B cell (primary cell): ENCODE measurements at regions of chr3 and their contacts with region 1.

Region 1: DNA sequence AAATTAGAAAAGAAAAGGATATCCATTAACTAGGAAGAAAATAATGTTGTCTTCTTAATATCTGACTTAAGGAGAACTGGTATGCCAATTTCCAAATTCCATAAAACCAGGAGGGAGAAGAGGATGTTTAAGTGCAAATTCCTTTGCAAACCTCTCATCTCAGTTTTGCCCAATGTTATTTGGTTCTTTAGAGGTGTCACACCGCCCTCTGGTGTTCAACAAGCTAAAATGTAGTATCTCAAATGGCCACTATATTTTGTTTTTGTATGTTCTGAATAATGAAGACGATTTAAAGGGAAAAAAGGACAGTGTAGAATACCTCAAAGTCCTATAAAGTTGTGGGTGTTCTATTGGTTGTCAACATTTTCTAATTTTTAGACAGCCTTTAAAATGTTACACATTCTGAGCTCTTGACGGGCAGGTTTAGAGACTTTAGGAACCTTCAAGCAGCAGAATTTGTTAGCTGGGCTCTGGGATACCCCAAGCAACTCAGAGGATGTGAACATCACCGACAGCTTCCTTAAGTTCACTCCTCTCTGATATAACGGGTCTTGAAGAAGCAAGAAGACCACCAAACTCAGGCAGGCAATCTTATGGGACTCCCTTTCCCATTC is 458.3 kb downstream of the MFSD1 start:
- DNase-seq: peak; percentile 55
- ATAC-seq: no peak
- H3K4me3 ChIP-seq: no peak overlapping the region
- H3K4me3 Mint-ChIP-seq: no peak overlapping the region
- H3K27ac ChIP-seq: no peak overlapping the region
- H3K27ac Mint-ChIP-seq: no peak overlapping the region
- H3K4me1 ChIP-seq: no peaks in the 10 kb centered on the region
- H3K4me1 Mint-ChIP-seq: no peaks in the 10 kb centered on the region
- H3K27me3 ChIP-seq: no peaks in the 10 kb centered on the region
- H3K27me3 Mint-ChIP-seq: peaks cover 34% of the 10 kb centered on the region
- CTCF ChIP-seq: peak; percentile 82

Region 2: GRCh38 chr3:158727206-158728060 is 532.7 kb before region 1 on chr3:
- CTCF ChIA-PET with region 1: interaction called, 8 read pairs
- POLR2A ChIA-PET with region 1: no interaction called
- intact Hi-C with region 1: loop called (anchors 5 kb)
- DNase-seq: peak; percentile 74
- ATAC-seq: peak; percentile 62
- H3K4me3 ChIP-seq: peak overlapping the region in 1 of 5 experiments; percentile 56
- H3K4me3 Mint-ChIP-seq: peak overlapping the region; percentile 25
- H3K27ac ChIP-seq: no peak overlapping the region
- H3K27ac Mint-ChIP-seq: no peak overlapping the region
- H3K4me1 ChIP-seq: peaks cover 20 to 27% of the 10 kb centered on the region in 2 donors
- H3K4me1 Mint-ChIP-seq: peaks cover 23% of the 10 kb centered on the region
- H3K27me3 ChIP-seq: peaks cover 0 to 9% (median 3%) of the 10 kb centered on the region in 4 experiments
- H3K27me3 Mint-ChIP-seq: peaks cover 5% of the 10 kb centered on the region
- CTCF ChIP-seq: peak; percentile 86

Region 3: DNA sequence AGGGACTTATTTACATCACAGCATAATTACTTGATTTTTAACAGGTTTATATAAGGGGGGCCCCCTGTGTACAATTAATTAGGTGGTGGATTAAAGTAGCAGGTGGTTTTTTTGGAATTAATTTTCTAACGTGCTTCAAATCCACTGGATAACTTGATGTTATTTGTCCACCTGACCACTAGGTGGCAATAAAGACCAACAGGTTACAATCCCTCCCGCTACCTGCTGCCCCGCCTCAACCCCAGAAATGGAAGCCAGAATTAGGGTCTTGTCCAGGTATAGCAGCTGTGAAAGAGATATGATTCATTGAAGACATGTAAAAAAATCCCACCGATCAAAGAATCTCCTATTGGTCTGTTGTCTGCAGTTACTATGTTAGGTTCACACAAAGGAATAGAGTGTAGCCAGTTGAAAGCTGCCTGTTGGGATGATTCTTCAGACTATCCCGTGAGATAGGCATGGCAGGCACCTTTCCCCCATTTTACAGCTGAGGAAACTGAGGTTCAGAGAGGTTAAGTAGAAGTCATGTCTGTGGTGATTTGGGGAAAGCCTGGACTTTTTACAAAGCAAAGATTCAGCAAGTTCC is 414.3 kb before region 1 on chr3:
- CTCF ChIA-PET with region 1: interaction called, 90 read pairs
- POLR2A ChIA-PET with region 1: no interaction called
- intact Hi-C with region 1: no loop called
- DNase-seq: peak; percentile 54
- ATAC-seq: peak; percentile 33
- H3K4me3 ChIP-seq: no peak overlapping the region
- H3K4me3 Mint-ChIP-seq: no peak overlapping the region
- H3K27ac ChIP-seq: no peak overlapping the region
- H3K27ac Mint-ChIP-seq: no peak overlapping the region
- H3K4me1 ChIP-seq: no peaks in the 10 kb centered on the region
- H3K4me1 Mint-ChIP-seq: peaks cover 2% of the 10 kb centered on the region
- H3K27me3 ChIP-seq: no peaks in the 10 kb centered on the region
- H3K27me3 Mint-ChIP-seq: no peaks in the 10 kb centered on the region
- CTCF ChIP-seq: peak; percentile 88

Region 4: GRCh38 chr3:159130108-159130507 is 130.0 kb before region 1 on chr3:
- CTCF ChIA-PET with region 1: interaction called, 32 read pairs
- POLR2A ChIA-PET with region 1: no interaction called
- intact Hi-C with region 1: loop called (anchors 1 kb)
- DNase-seq: peak; percentile 26
- ATAC-seq: no peak
- H3K4me3 ChIP-seq: no peak overlapping the region
- H3K4me3 Mint-ChIP-seq: no peak overlapping the region
- H3K27ac ChIP-seq: no peak overlapping the region
- H3K27ac Mint-ChIP-seq: no peak overlapping the region
- H3K4me1 ChIP-seq: no peaks in the 10 kb centered on the region
- H3K4me1 Mint-ChIP-seq: no peaks in the 10 kb centered on the region
- H3K27me3 ChIP-seq: no peaks in the 10 kb centered on the region
- H3K27me3 Mint-ChIP-seq: peaks cover 5% of the 10 kb centered on the region
- CTCF ChIP-seq: peak; percentile 27

Region 5: DNA sequence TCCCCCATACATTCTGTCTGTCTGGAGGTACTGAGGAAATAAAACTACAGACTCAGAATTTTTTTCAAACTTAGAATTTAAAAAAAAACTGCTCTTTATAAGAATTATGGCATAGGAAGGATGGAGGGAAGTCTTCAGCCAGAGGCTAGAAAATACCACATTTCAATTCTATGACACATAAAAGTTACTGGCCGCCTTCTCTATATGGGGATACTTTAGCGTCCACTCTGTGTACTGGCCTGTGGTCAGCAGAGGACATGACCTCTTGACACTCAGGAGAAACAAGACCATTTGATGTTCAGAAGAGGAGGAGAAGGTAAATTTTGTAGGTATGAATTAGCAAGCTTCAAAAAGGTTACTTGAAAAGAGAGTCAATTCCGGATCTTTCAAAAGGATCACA is 40.9 kb before region 1 on chr3:
- CTCF ChIA-PET with region 1: no interaction called
- POLR2A ChIA-PET with region 1: no interaction called
- intact Hi-C with region 1: no loop called
- DNase-seq: no peak
- ATAC-seq: no peak
- H3K4me3 ChIP-seq: no peak overlapping the region
- H3K4me3 Mint-ChIP-seq: no peak overlapping the region
- H3K27ac ChIP-seq: no peak overlapping the region
- H3K27ac Mint-ChIP-seq: no peak overlapping the region
- H3K4me1 ChIP-seq: no peaks in the 10 kb centered on the region
- H3K4me1 Mint-ChIP-seq: no peaks in the 10 kb centered on the region
- H3K27me3 ChIP-seq: peaks cover 0 to 3% (median 0%) of the 10 kb centered on the region in 4 experiments
- H3K27me3 Mint-ChIP-seq: peaks cover 18% of the 10 kb centered on the region
- CTCF ChIP-seq: no peak

Region 6: GRCh38 chr3:159804726-159805410 is 544.7 kb after region 1 on chr3:
- CTCF ChIA-PET with region 1: no interaction called
- POLR2A ChIA-PET with region 1: no interaction called
- intact Hi-C with region 1: loop called (anchors 1 kb)
- DNase-seq: peak; percentile 27
- ATAC-seq: peak; percentile 33
- H3K4me3 ChIP-seq: no peak overlapping the region
- H3K4me3 Mint-ChIP-seq: no peak overlapping the region
- H3K27ac ChIP-seq: no peak overlapping the region
- H3K27ac Mint-ChIP-seq: no peak overlapping the region
- H3K4me1 ChIP-seq: no peaks in the 10 kb centered on the region
- H3K4me1 Mint-ChIP-seq: no peaks in the 10 kb centered on the region
- H3K27me3 ChIP-seq: no peaks in the 10 kb centered on the region
- H3K27me3 Mint-ChIP-seq: peaks cover 5% of the 10 kb centered on the region
- CTCF ChIP-seq: peak; percentile 55

Region 7: DNA sequence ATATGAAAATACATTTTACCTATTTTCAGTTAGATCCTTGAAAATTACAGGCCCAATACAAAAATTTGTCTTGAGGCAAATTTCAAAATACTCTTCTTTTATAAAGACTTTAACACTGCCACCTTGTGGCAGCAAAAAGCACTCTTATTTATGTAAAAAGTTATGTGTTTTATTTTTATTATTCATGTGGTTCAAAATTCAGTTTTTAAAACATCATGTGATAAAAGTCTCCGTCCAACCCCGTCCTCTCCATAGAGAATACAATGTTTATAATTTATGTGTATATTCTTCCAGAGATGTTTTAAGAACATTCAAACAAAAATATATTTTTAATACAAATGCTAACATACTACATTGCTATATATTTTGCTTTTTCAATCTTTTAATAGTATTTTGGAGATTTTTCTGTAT is 1226.3 kb after region 1 on chr3:
- CTCF ChIA-PET with region 1: no interaction called
- POLR2A ChIA-PET with region 1: no interaction called
- intact Hi-C with region 1: loop called (anchors 5 kb)
- DNase-seq: peak; percentile 48
- ATAC-seq: no peak
- H3K4me3 ChIP-seq: no peak overlapping the region
- H3K4me3 Mint-ChIP-seq: no peak overlapping the region
- H3K27ac ChIP-seq: no peak overlapping the region
- H3K27ac Mint-ChIP-seq: no peak overlapping the region
- H3K4me1 ChIP-seq: peaks cover 3 to 7% of the 10 kb centered on the region in 2 donors
- H3K4me1 Mint-ChIP-seq: peaks cover 8% of the 10 kb centered on the region
- H3K27me3 ChIP-seq: no peaks in the 10 kb centered on the region
- H3K27me3 Mint-ChIP-seq: no peaks in the 10 kb centered on the region
- CTCF ChIP-seq: peak; percentile 83